CD4-positive, alpha-beta T cell (primary cell): ENCODE measurements at regions of chr2 and their contacts with region 1.

Region 1: DNA sequence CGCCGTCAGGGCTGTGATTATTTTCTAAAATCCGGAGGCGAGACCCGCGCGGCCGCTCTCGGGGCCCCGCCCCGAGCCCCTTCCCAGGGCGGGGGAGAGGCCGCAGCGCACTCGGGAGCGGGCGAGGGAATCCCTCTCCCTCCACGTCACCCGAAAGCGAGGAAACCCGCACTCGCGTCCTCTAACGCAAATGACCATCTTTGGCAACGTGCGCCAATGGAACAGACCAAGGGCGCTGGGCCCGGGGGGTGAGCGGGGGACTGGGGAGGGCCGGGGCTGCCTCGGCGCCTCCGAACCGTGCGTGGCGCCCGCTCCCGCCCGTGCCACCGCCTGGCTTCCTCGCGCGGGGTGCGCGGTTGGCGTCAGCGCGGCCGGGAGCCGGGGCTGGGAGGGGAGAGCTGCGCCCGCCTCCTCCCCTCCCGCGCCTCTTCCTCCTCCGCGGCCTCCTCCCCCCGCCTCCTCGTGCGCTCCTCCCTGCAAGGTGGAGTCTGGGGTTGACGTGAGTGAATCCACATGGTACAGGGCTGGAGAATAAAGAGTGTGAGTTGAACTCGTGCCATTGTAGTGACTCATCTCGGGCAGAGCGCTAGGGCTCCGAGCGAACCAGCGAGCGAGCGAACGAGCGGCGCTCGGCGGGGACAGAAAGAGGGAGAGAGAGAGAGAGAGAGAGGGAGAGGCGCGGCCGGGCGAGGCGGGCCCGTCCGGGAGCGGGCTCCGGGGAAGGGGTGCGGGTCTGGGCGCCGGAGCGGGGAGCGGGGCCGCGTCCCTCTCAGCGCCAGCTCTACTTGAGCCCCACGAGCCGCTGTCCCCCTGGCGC is at the start of gene FOSL2:
- DNase-seq: peak; percentile 88 to 99 (median 92)
- ATAC-seq: peak; percentile 72
- H3K4me3 ChIP-seq: peak within 1 kb of the TSS; percentile 79
- H3K4me3 Mint-ChIP-seq: peak within 1 kb of the TSS; percentile 95
- H3K27ac ChIP-seq: peak within 1 kb of the TSS; percentile 78 to 89
- H3K27ac Mint-ChIP-seq: peak within 1 kb of the TSS; percentile 90
- H3K4me1 ChIP-seq: peaks cover 49% of the 10 kb centered on the region
- H3K4me1 Mint-ChIP-seq: peaks cover 20% of the 10 kb centered on the region
- H3K27me3 ChIP-seq: no peaks in the 10 kb centered on the region
- H3K27me3 Mint-ChIP-seq: peaks cover 5% of the 10 kb centered on the region
- CTCF ChIP-seq: no peak
- total RNA-seq, gene FOSL2: 152 to 155 TPM

Region 2: GRCh38 chr2:27356382-27357181 is 1035.9 kb before region 1 on chr2 and contains the start of gene GTF3C2:
- CTCF ChIA-PET with region 1: no interaction called
- POLR2A ChIA-PET with region 1: no interaction called
- intact Hi-C with region 1: loop called in 1 of 2 experiments (anchors 5 kb)
- DNase-seq: peak; percentile 82 to 97 (median 88)
- ATAC-seq: peak; percentile 78
- H3K4me3 ChIP-seq: peak within 1 kb of the TSS; percentile 86
- H3K4me3 Mint-ChIP-seq: peak within 1 kb of the TSS; percentile 96
- H3K27ac ChIP-seq: peak within 1 kb of the TSS; percentile 87 to 89
- H3K27ac Mint-ChIP-seq: peak within 1 kb of the TSS; percentile 99
- H3K4me1 ChIP-seq: peaks cover 44% of the 10 kb centered on the region
- H3K4me1 Mint-ChIP-seq: peaks cover 56% of the 10 kb centered on the region
- H3K27me3 ChIP-seq: no peaks in the 10 kb centered on the region
- H3K27me3 Mint-ChIP-seq: no peaks in the 10 kb centered on the region
- CTCF ChIP-seq: no peak
- total RNA-seq, gene GTF3C2: 54.6 to 56.8 TPM

Region 3: DNA sequence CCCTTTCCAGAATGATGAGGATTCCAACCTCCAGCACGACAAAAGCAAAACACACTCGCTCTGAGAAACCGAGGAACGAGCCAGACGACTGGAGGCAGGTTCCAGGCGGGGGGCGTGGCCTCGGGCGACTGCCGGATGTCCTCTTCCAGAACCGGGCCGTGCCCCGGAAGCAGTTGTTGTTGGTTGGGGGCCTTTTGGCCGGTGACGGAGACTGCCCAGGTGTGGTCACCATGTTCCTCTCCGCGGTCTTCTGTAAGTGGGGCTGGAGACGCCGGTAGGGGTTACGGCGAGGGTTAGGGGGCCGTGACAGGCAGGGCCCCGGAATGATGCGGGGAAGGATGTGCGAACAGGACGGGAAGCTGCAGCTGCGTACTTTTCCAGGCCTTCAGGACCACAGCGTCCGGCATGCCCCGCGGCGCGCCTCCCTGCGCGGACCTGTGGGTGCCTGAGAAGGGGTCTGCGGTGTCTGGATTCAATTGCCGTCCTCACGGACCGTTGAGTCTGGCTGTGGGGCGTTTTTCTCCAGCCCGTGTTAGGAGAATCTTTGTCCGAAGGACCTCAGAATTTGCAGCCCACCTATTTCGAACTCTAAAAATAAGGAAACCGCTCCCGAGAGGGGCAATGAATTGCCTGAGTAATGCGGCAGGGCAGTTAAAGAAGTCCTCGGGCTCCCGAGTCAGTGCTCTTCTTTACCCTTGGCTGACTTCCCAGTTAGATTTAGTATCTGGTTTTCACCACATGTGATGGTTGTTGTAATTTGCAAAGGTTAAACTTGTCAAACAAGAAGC is 620.8 kb before region 1 on chr2 and contains the start of gene MRPL33:
- CTCF ChIA-PET with region 1: no interaction called
- POLR2A ChIA-PET with region 1: no interaction called
- intact Hi-C with region 1: loop called (anchors 2 to 10 kb)
- DNase-seq: peak; percentile 85 to 95 (median 89)
- ATAC-seq: peak; percentile 89
- H3K4me3 ChIP-seq: peak within 1 kb of the TSS; percentile 73
- H3K4me3 Mint-ChIP-seq: peak within 1 kb of the TSS; percentile 100
- H3K27ac ChIP-seq: peak within 1 kb of the TSS; percentile 74 to 91
- H3K27ac Mint-ChIP-seq: peak within 1 kb of the TSS; percentile 100
- H3K4me1 ChIP-seq: peaks cover 15% of the 10 kb centered on the region
- H3K4me1 Mint-ChIP-seq: peaks cover 59% of the 10 kb centered on the region
- H3K27me3 ChIP-seq: no peaks in the 10 kb centered on the region
- H3K27me3 Mint-ChIP-seq: no peaks in the 10 kb centered on the region
- CTCF ChIP-seq: no peak
- total RNA-seq, gene MRPL33: 33.1 to 37.2 TPM

Region 4: DNA sequence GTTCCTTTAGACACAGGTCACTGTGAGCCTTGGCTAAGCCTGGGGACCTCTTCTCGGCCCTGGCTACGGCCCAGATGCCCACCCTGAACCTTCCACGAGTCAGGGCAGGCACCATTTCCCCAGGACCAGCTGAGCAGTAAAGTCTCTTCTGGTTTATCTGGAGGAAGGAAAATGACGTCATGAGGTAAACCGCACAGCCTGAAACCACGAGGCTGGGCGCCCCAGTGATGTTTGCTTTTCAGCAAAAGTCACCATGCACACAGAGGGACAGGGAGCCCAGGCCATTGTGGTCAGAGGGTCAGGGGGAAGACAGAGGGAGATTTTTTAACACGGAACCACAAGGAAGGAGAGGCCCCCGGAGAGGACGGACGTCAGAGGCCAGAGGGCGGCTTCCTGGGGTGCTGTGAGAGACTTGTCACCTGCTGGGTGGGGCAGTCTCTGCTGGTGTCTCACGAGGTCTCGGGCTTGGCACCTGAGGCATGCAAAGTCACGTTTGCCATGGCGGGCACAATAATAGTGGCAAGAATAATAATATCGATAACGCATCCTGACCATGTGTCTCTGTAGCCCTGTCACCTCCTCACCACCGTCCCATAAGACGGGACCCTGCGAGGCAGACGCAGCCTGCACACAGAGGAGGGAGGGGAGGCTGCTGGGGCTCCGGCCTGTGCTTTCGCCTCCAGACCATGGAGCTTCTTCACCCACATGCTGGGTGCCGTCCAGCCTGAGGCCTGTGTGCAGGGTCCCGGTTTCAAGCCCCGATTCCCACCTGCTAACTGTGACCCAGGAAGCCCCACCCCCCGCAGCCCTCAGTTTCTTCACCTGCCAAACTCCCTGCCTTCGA is 33.1 kb before region 1 on chr2:
- CTCF ChIA-PET with region 1: no interaction called
- POLR2A ChIA-PET with region 1: interaction called, 35 read pairs
- intact Hi-C with region 1: loop called (anchors 1 to 2 kb)
- DNase-seq: peak; percentile 54 to 94 (median 72)
- ATAC-seq: peak; percentile 84
- H3K4me3 ChIP-seq: peak overlapping the region; percentile 19
- H3K4me3 Mint-ChIP-seq: peak overlapping the region; percentile 91
- H3K27ac ChIP-seq: peak overlapping the region in 1 of 2 donors; percentile 44
- H3K27ac Mint-ChIP-seq: peak overlapping the region; percentile 89
- H3K4me1 ChIP-seq: peaks cover 84% of the 10 kb centered on the region
- H3K4me1 Mint-ChIP-seq: peaks cover 53% of the 10 kb centered on the region
- H3K27me3 ChIP-seq: no peaks in the 10 kb centered on the region
- H3K27me3 Mint-ChIP-seq: peaks cover 4% of the 10 kb centered on the region
- CTCF ChIP-seq: no peak

Region 5: GRCh38 chr2:28430788-28431418 is 38.4 kb after region 1 on chr2:
- CTCF ChIA-PET with region 1: no interaction called
- POLR2A ChIA-PET with region 1: no interaction called
- intact Hi-C with region 1: no loop called
- DNase-seq: peak in 1 of 14 experiments; percentile 17
- ATAC-seq: no peak
- H3K4me3 ChIP-seq: no peak overlapping the region
- H3K4me3 Mint-ChIP-seq: no peak overlapping the region
- H3K27ac ChIP-seq: no peak overlapping the region
- H3K27ac Mint-ChIP-seq: no peak overlapping the region
- H3K4me1 ChIP-seq: peaks cover 23% of the 10 kb centered on the region
- H3K4me1 Mint-ChIP-seq: peaks cover 3% of the 10 kb centered on the region
- H3K27me3 ChIP-seq: no peaks in the 10 kb centered on the region
- H3K27me3 Mint-ChIP-seq: no peaks in the 10 kb centered on the region
- CTCF ChIP-seq: no peak

Region 6: GRCh38 chr2:28452534-28453081 is 60.1 kb after region 1 on chr2:
- CTCF ChIA-PET with region 1: interaction called, 3 read pairs
- POLR2A ChIA-PET with region 1: interaction called, 3 read pairs
- intact Hi-C with region 1: loop called (anchors 2 to 5 kb)
- DNase-seq: peak; percentile 61 to 86 (median 75)
- ATAC-seq: peak; percentile 92
- H3K4me3 ChIP-seq: no peak overlapping the region
- H3K4me3 Mint-ChIP-seq: no peak overlapping the region
- H3K27ac ChIP-seq: no peak overlapping the region
- H3K27ac Mint-ChIP-seq: no peak overlapping the region
- H3K4me1 ChIP-seq: peaks cover 11% of the 10 kb centered on the region
- H3K4me1 Mint-ChIP-seq: no peaks in the 10 kb centered on the region
- H3K27me3 ChIP-seq: no peaks in the 10 kb centered on the region
- H3K27me3 Mint-ChIP-seq: no peaks in the 10 kb centered on the region
- CTCF ChIP-seq: peak; percentile 89

Region 7: DNA sequence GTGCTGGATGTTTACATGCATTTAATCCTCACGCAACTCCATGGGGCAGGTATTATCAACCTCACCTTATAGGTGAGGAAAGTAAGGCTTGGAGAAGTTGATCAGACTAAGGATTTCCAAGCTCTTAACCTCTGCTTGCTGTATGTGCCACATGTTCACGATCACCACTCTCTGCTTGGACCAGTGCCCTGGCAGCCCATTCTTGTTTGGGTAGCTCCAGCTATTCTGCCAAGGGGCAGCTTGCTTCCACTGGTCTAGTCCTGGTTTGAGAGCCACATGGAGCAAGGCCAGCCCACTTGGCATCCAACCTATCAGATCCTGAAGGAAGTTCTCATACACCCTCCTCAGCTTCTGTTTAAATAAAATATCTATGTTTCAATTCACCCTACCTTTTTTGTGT is 117.7 kb after region 1 on chr2:
- CTCF ChIA-PET with region 1: no interaction called
- POLR2A ChIA-PET with region 1: no interaction called
- intact Hi-C with region 1: no loop called
- DNase-seq: no peak
- ATAC-seq: no peak
- H3K4me3 ChIP-seq: no peak overlapping the region
- H3K4me3 Mint-ChIP-seq: no peak overlapping the region
- H3K27ac ChIP-seq: no peak overlapping the region
- H3K27ac Mint-ChIP-seq: no peak overlapping the region
- H3K4me1 ChIP-seq: peaks cover 4% of the 10 kb centered on the region
- H3K4me1 Mint-ChIP-seq: no peaks in the 10 kb centered on the region
- H3K27me3 ChIP-seq: peaks cover 0 to 4% of the 10 kb centered on the region in 2 experiments
- H3K27me3 Mint-ChIP-seq: no peaks in the 10 kb centered on the region
- CTCF ChIP-seq: no peak

Region 8: GRCh38 chr2:28583899-28584553 is 191.5 kb after region 1 on chr2:
- CTCF ChIA-PET with region 1: no interaction called
- POLR2A ChIA-PET with region 1: no interaction called
- intact Hi-C with region 1: no loop called
- DNase-seq: peak in 9 of 14 experiments; percentile 17 to 69 (median 33)
- ATAC-seq: no peak
- H3K4me3 ChIP-seq: no peak overlapping the region
- H3K4me3 Mint-ChIP-seq: no peak overlapping the region
- H3K27ac ChIP-seq: no peak overlapping the region
- H3K27ac Mint-ChIP-seq: no peak overlapping the region
- H3K4me1 ChIP-seq: peaks cover 28% of the 10 kb centered on the region
- H3K4me1 Mint-ChIP-seq: peaks cover 25% of the 10 kb centered on the region
- H3K27me3 ChIP-seq: no peaks in the 10 kb centered on the region
- H3K27me3 Mint-ChIP-seq: no peaks in the 10 kb centered on the region
- CTCF ChIP-seq: no peak